Right ventricle myocardium inferior (tissue), 1 donor: ENCODE measurements at regions of chr6 and their contacts with region 1.

Region 1: DNA sequence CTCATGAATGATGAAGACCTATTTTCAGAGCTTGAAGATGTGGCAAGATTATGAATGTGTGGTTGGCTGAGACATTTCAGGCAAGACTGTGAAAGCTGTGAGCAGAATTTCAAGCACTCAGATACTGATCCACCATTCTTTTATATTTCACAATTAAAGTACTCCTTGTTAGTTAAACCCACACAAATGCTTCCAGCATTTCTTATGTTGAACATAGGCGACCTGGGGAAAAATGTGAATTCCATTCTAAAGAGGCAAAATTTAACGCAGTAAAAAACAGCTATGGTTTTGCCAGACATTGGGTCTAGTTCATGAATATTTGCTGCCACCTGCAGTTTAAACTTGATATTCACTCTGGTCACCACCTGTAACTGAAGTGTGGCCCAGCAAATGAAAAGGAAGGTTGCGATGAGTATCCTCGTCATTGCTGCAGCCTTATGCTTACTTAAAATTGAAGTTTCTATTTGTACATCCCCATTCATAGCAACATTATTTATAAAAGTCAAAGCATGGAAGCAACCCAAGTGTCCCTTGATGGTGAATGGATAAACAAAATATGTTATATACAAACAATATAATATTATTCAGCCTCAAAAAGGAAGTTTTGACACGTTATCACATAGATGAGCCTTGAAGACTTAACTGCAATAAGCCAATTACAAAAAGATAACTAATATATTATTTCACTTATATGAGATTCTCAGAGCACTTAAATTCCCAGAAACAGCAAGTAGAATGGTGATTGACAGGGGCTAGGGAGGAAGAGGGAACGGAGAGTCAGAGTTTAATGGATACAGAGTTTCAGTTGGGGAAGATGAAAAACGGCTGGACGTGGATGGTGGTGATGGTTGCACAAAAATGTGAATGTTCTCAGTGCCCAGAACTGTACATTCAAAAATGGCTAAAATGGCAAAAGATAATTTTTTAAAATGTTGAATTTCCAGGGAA is 32.4 kb upstream of the FAM184A start:
- DNase-seq: no peak
- ATAC-seq: peak; percentile 74

Region 2: GRCh38 chr6:118968416-118968815 is 142.5 kb before region 1 on chr6:
- intact Hi-C with region 1: loop called (anchors 1 kb)
- DNase-seq: no peak
- ATAC-seq: no peak